B cell (primary cell): ENCODE measurements at regions of chrX and their contacts with region 1.

Region 1: DNA sequence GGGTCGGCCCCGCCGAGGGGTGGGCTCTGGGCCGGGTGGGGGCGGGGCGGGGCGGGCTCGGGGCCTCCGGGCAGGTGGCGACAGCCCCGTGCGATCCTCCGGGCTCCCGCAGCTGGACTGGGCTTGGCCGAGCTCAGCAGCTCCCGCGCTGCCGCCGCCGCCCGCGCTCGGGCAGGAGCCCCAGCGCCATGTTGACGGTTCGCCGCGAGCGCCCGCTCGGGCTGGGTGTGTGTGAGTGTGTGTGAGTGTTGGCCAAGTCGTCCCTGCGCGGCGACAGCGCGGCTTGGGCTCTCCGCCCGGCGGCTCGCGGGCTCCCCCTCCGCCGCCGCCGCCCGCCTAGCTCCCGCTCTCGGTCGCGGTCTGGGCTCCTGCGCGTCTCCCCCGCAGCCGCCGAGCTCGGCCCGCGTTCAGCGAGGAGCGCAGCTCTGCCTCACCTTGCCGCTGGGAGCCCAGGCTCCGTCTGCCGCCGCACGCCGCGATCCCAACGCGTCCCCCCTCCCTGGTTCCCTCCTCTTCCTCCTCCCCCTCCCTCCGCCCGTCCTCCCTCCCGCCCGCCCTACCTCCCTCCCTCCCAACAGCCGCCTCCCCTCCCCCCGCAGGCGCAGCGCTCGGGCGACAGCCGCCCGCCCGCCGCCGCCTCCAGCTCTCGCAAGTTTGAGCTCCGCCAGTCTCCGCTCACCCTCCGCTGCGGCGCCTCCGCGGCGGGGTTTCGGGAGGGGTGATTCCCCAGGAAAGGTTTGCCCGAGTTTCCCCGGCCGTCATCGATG is at the start of gene BCOR:
- DNase-seq: peak; percentile 83
- ATAC-seq: peak; percentile 29
- H3K4me3 ChIP-seq: peak within 1 kb of the TSS in 4 of 5 experiments; percentile 58 to 81 (median 62)
- H3K4me3 Mint-ChIP-seq: peak within 1 kb of the TSS; percentile 93
- H3K27ac ChIP-seq: peak within 1 kb of the TSS; percentile 73 to 89
- H3K27ac Mint-ChIP-seq: peak within 1 kb of the TSS; percentile 95
- H3K4me1 ChIP-seq: peaks cover 35 to 40% of the 10 kb centered on the region in 2 donors
- H3K4me1 Mint-ChIP-seq: peaks cover 35% of the 10 kb centered on the region
- H3K27me3 ChIP-seq: peaks cover 0 to 2% (median 0%) of the 10 kb centered on the region in 4 experiments
- H3K27me3 Mint-ChIP-seq: no peaks in the 10 kb centered on the region
- CTCF ChIP-seq: no peak
- total RNA-seq, gene BCOR: 65.3 and 66.1 TPM in 2 replicates

Region 2: GRCh38 chrX:39859991-39860861 is 237.5 kb before region 1 on chrX:
- CTCF ChIA-PET with region 1: no interaction called
- POLR2A ChIA-PET with region 1: interaction called, 10 read pairs
- intact Hi-C with region 1: no loop called
- DNase-seq: peak; percentile 18
- ATAC-seq: peak; percentile 54
- H3K4me3 ChIP-seq: no peak overlapping the region
- H3K4me3 Mint-ChIP-seq: peak overlapping the region; percentile 50
- H3K27ac ChIP-seq: no peak overlapping the region
- H3K27ac Mint-ChIP-seq: peak overlapping the region; percentile 82
- H3K4me1 ChIP-seq: peaks cover 14 to 22% of the 10 kb centered on the region in 2 donors
- H3K4me1 Mint-ChIP-seq: peaks cover 30% of the 10 kb centered on the region
- H3K27me3 ChIP-seq: no peaks in the 10 kb centered on the region
- H3K27me3 Mint-ChIP-seq: no peaks in the 10 kb centered on the region
- CTCF ChIP-seq: no peak

Region 3: GRCh38 chrX:40108959-40109287 is 11.2 kb after region 1 on chrX:
- CTCF ChIA-PET with region 1: interaction called, 4 read pairs
- POLR2A ChIA-PET with region 1: interaction called, 9 read pairs
- intact Hi-C with region 1: loop called (anchors 1 kb)
- DNase-seq: peak; percentile 58
- ATAC-seq: peak; percentile 39
- H3K4me3 ChIP-seq: peak overlapping the region in 4 of 5 experiments; percentile 24 to 63 (median 48)
- H3K4me3 Mint-ChIP-seq: peak overlapping the region; percentile 66
- H3K27ac ChIP-seq: no peak overlapping the region
- H3K27ac Mint-ChIP-seq: no peak overlapping the region
- H3K4me1 ChIP-seq: peaks cover 18 to 20% of the 10 kb centered on the region in 2 donors
- H3K4me1 Mint-ChIP-seq: peaks cover 17% of the 10 kb centered on the region
- H3K27me3 ChIP-seq: peaks cover 0 to 7% (median 0%) of the 10 kb centered on the region in 4 experiments
- H3K27me3 Mint-ChIP-seq: no peaks in the 10 kb centered on the region
- CTCF ChIP-seq: no peak

Region 4: DNA sequence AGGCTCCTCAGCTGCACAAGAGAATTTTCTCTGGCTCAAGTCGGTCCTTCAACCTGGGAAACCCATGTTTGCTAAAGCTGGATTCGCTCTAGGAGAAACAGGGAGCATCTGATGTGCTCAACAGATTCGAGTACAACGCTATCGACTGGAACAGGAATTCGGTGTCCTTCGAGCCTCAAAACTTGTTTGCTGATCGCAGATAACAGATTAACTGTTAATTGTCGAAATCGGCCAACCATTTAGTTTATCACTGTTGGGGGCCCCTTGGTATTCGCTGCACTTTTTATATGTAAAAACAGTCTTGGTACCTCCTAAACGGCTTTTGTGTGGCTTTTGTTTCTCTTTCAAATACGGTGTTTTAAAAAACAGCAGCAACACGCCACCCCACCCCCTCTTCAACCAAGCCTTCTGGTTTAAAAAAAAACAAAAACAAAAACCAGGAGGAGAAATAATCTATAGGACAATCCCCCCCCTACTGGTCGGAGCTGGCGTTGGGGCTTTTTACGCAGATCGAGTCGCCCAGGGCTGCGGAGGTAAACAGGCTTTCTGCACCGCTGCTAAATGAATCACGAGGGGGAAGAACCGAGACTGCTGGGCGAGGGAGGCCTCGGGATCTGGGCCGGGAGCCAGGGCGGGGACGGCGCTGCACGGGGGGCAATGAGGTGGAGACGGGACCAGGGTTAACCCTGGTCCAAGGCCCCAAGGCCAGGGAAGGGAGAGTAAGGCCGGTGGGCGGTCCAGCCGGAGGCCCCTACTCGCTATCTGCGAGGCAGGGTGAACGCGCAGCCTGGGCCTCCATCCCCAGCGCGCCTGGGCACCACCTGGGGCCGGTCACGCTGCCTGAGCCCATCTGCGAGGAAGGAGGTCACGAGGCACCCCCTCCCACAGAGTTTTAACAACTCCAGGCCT is 71.8 kb after region 1 on chrX:
- CTCF ChIA-PET with region 1: interaction called, 50 read pairs
- POLR2A ChIA-PET with region 1: interaction called, 102 read pairs
- intact Hi-C with region 1: loop called (anchors 1 kb)
- DNase-seq: peak; percentile 93
- ATAC-seq: peak; percentile 66
- H3K4me3 ChIP-seq: peak overlapping the region in 4 of 5 experiments; percentile 12 to 34 (median 26)
- H3K4me3 Mint-ChIP-seq: peak overlapping the region; percentile 87
- H3K27ac ChIP-seq: peak overlapping the region; percentile 97 to 99
- H3K27ac Mint-ChIP-seq: peak overlapping the region; percentile 100
- H3K4me1 ChIP-seq: peaks cover 44 to 72% of the 10 kb centered on the region in 2 donors
- H3K4me1 Mint-ChIP-seq: peaks cover 58% of the 10 kb centered on the region
- H3K27me3 ChIP-seq: no peaks in the 10 kb centered on the region
- H3K27me3 Mint-ChIP-seq: no peaks in the 10 kb centered on the region
- CTCF ChIP-seq: peak; percentile 61

Region 5: GRCh38 chrX:40227125-40227524 is 129.4 kb after region 1 on chrX:
- CTCF ChIA-PET with region 1: no interaction called
- POLR2A ChIA-PET with region 1: no interaction called
- intact Hi-C with region 1: no loop called
- DNase-seq: peak; percentile 17
- ATAC-seq: no peak
- H3K4me3 ChIP-seq: no peak overlapping the region
- H3K4me3 Mint-ChIP-seq: no peak overlapping the region
- H3K27ac ChIP-seq: no peak overlapping the region
- H3K27ac Mint-ChIP-seq: no peak overlapping the region
- H3K4me1 ChIP-seq: no peaks in the 10 kb centered on the region
- H3K4me1 Mint-ChIP-seq: peaks cover 1% of the 10 kb centered on the region
- H3K27me3 ChIP-seq: no peaks in the 10 kb centered on the region
- H3K27me3 Mint-ChIP-seq: no peaks in the 10 kb centered on the region
- CTCF ChIP-seq: no peak

Region 6: GRCh38 chrX:40266490-40267333 is 169.0 kb after region 1 on chrX:
- CTCF ChIA-PET with region 1: interaction called, 3 read pairs
- POLR2A ChIA-PET with region 1: no interaction called
- intact Hi-C with region 1: loop called (anchors 10 kb)
- DNase-seq: peak; percentile 58
- ATAC-seq: peak; percentile 51
- H3K4me3 ChIP-seq: peak overlapping the region in 4 of 5 experiments; percentile 35 to 50 (median 44)
- H3K4me3 Mint-ChIP-seq: peak overlapping the region; percentile 84
- H3K27ac ChIP-seq: no peak overlapping the region
- H3K27ac Mint-ChIP-seq: peak overlapping the region; percentile 56
- H3K4me1 ChIP-seq: peaks cover 16 to 23% of the 10 kb centered on the region in 2 donors
- H3K4me1 Mint-ChIP-seq: peaks cover 13% of the 10 kb centered on the region
- H3K27me3 ChIP-seq: no peaks in the 10 kb centered on the region
- H3K27me3 Mint-ChIP-seq: no peaks in the 10 kb centered on the region
- CTCF ChIP-seq: peak; percentile 50